Activated B cell treated with CpG ODN at 0.5 μM for 24 hours (primary cell): ENCODE measurements at regions of chr3 and their contacts with region 1.

Region 1: GRCh38 chr3:187767266-187768012 is 22.2 kb upstream of the BCL6 start:
- DNase-seq: no peak
- ATAC-seq: no peak
- H3K4me3 Mint-ChIP-seq: no peak overlapping the region
- H3K27ac Mint-ChIP-seq: no peak overlapping the region
- H3K4me1 Mint-ChIP-seq: peaks cover 23% of the 10 kb centered on the region
- H3K27me3 Mint-ChIP-seq: peaks cover 3% of the 10 kb centered on the region
- CTCF ChIP-seq: no peak

Region 2: GRCh38 chr3:187802928-187803259 is 35.5 kb after region 1 on chr3:
- CTCF ChIA-PET with region 1: no interaction called
- POLR2A ChIA-PET with region 1: no interaction called
- intact Hi-C with region 1: loop called (anchors 5 kb)
- DNase-seq: no peak
- ATAC-seq: peak; percentile 76
- H3K4me3 Mint-ChIP-seq: peak overlapping the region; percentile 39
- H3K27ac Mint-ChIP-seq: peak overlapping the region; percentile 54
- H3K4me1 Mint-ChIP-seq: peaks cover 44% of the 10 kb centered on the region
- H3K27me3 Mint-ChIP-seq: no peaks in the 10 kb centered on the region
- CTCF ChIP-seq: no peak

Region 3: GRCh38 chr3:188286087-188286513 is 518.7 kb after region 1 on chr3:
- CTCF ChIA-PET with region 1: no interaction called
- POLR2A ChIA-PET with region 1: no interaction called
- intact Hi-C with region 1: no loop called
- DNase-seq: no peak
- ATAC-seq: no peak
- H3K4me3 Mint-ChIP-seq: no peak overlapping the region
- H3K27ac Mint-ChIP-seq: no peak overlapping the region
- H3K4me1 Mint-ChIP-seq: peaks cover 42% of the 10 kb centered on the region
- H3K27me3 Mint-ChIP-seq: no peaks in the 10 kb centered on the region
- CTCF ChIP-seq: no peak